Adrenal gland (tissue), 19 donors: ENCODE measurements at regions of chr19 and their contacts with region 1.

Region 1: GRCh38 chr19:38239816-38240215 is 15.8 kb upstream of the DPF1 start:
- DNase-seq: no peak
- H3K4me3 ChIP-seq: no peak overlapping the region
- H3K27ac ChIP-seq: no peak overlapping the region
- H3K4me1 ChIP-seq: peaks cover 0 to 10% of the 10 kb centered on the region in 2 donors
- H3K27me3 ChIP-seq: no peaks in the 10 kb centered on the region
- CTCF ChIP-seq: no peak
- POLR2A ChIP-seq: no peak

Region 2: GRCh38 chr19:38319421-38320258 is 79.8 kb after region 1 on chr19 and contains the start of gene KCNK6:
- intact Hi-C with region 1: loop called in 1 of 2 experiments (anchors 5 kb)
- DNase-seq: peak in 3 of 7 donors; percentile 31 to 51 (median 37)
- H3K4me3 ChIP-seq: peak within 1 kb of the TSS in 3 of 4 donors; percentile 25 to 66 (median 62)
- H3K27ac ChIP-seq: peak within 1 kb of the TSS in 4 of 5 donors; percentile 48 to 84 (median 64)
- H3K4me1 ChIP-seq: peaks cover 34 to 41% of the 10 kb centered on the region in 2 donors
- H3K27me3 ChIP-seq: no peaks in the 10 kb centered on the region
- CTCF ChIP-seq: no peak
- POLR2A ChIP-seq: peak in 1 of 2 donors; percentile 9
- total RNA-seq, gene KCNK6: 1.2 to 5.4 (median 4.1) TPM